ENCODE measurements at regions of chr1 and their contacts with region 1.

Region 1: GRCh38 chr1:12124693-12125421 is 41.9 kb upstream of the TNFRSF1B start:
- DNase-seq: peak; percentile 69 to 80 (median 74)
- H3K4me3 ChIP-seq: no peak overlapping the region
- H3K27ac ChIP-seq: no peak overlapping the region
- H3K4me1 ChIP-seq: peaks cover 4 to 21% (median 18%) of the 10 kb centered on the region in 4 experiments
- H3K27me3 ChIP-seq: no peaks in the 10 kb centered on the region

Region 2: GRCh38 chr1:12005488-12006166 is 119.2 kb before region 1 on chr1:
- CTCF ChIA-PET with region 1: no interaction called
- POLR2A ChIA-PET with region 1: no interaction called
- DNase-seq: peak; percentile 51 to 78 (median 66)
- H3K4me3 ChIP-seq: no peak overlapping the region
- H3K27ac ChIP-seq: peak overlapping the region in 1 of 2 experiments; percentile 49
- H3K4me1 ChIP-seq: no peaks in the 10 kb centered on the region
- H3K27me3 ChIP-seq: no peaks in the 10 kb centered on the region

Region 3: DNA sequence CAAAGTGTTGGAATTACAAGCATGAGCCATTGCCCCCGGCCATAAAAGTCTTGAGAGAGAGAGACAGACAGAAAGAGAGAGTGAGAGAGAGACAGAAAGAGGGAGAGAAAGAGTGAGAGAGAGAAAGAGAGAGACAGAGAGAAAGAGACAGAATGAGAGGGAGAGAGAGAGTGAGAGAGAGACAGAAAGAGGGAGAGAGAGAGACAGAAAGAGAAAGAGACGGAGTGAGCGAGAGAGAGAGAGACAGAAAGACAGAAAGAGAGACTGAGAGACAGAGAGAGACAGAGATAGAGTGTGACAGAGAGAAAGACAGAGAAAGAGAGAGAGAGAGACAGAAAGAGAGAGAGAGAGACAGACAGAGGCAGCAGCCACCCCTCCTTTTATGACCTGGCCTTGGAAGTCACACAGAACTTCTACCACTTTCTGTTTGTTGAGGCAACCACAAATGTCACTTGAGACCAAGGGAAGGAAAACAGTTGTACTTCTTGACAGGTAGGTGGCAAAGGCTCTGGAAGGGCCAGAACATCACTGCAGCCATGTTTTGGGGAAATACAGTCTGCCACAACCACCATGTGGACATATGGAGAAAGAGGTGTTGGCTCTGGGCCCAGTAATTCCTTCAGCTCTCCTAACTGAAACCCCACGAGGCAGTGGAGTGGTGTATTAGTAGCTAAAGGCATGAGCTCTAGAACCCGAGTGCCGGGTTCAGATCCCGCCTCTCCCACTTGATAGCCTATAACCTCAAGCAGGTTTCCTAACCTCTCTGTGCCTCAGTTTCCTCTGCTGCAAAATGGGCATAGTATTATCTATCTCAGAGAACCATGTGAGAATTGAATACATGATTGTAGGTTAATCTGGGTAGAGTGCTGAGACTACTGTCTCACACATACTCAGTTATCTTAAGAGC is 11.2 kb before region 1 on chr1:
- CTCF ChIA-PET with region 1: interaction called, 10 read pairs
- POLR2A ChIA-PET with region 1: interaction called, 3 read pairs
- DNase-seq: peak in 2 of 3 donors; percentile 37 to 45
- H3K4me3 ChIP-seq: no peak overlapping the region
- H3K27ac ChIP-seq: no peak overlapping the region
- H3K4me1 ChIP-seq: no peaks in the 10 kb centered on the region
- H3K27me3 ChIP-seq: no peaks in the 10 kb centered on the region

Region 4: DNA sequence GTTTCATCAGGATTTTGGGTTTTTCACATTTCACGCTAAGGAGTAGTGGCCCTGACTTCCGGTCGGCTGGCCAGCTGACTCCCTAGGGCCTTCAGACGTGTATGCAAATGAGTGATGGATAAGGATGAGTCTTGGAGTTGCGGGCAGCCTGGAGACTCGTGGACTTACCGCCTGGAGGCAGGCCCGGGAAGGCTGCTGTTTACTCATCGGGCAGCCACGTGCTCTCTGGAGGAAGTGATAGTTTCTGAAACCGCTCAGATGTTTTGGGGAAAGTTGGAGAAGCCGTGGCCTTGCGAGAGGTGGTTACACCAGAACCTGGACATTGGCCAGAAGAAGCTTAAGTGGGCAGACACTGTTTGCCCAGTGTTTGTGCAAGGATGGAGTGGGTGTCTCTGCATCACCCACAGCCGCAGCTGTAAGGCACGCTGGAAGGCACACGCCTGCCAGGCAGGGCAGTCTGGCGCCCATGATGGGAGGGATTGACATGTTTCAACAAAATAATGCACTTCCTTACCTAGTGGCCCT is 18.8 kb after region 1 on chr1:
- CTCF ChIA-PET with region 1: interaction called, 12 read pairs
- POLR2A ChIA-PET with region 1: no interaction called
- DNase-seq: peak in 2 of 3 donors; percentile 66 to 76
- H3K4me3 ChIP-seq: peak overlapping the region in 2 of 7 experiments; percentile 20 to 28
- H3K27ac ChIP-seq: no peak overlapping the region
- H3K4me1 ChIP-seq: peaks cover 8 to 87% (median 78%) of the 10 kb centered on the region in 4 experiments
- H3K27me3 ChIP-seq: no peaks in the 10 kb centered on the region

Region 5: GRCh38 chr1:12184008-12184681 is 59.3 kb after region 1 on chr1:
- CTCF ChIA-PET with region 1: interaction called, 89 read pairs
- POLR2A ChIA-PET with region 1: no interaction called
- DNase-seq: peak in 2 of 3 donors; percentile 87 to 88
- H3K4me3 ChIP-seq: peak overlapping the region in 2 of 7 experiments; percentile 8 to 21
- H3K27ac ChIP-seq: peak overlapping the region in 1 of 2 experiments; percentile 11
- H3K4me1 ChIP-seq: peaks cover 3 to 75% (median 39%) of the 10 kb centered on the region in 4 experiments
- H3K27me3 ChIP-seq: no peaks in the 10 kb centered on the region

Region 6: GRCh38 chr1:12208764-12209494 is 84.1 kb after region 1 on chr1:
- CTCF ChIA-PET with region 1: interaction called, 213 read pairs
- POLR2A ChIA-PET with region 1: no interaction called
- DNase-seq: peak; percentile 80 to 88 (median 82)
- H3K4me3 ChIP-seq: peak overlapping the region in 2 of 7 experiments; percentile 2 to 5
- H3K27ac ChIP-seq: no peak overlapping the region
- H3K4me1 ChIP-seq: peaks cover 7 to 32% (median 27%) of the 10 kb centered on the region in 4 experiments
- H3K27me3 ChIP-seq: no peaks in the 10 kb centered on the region

Region 7: GRCh38 chr1:12229835-12230548 is 105.1 kb after region 1 on chr1 and contains the start of gene VPS13D:
- CTCF ChIA-PET with region 1: interaction called, 19 read pairs
- POLR2A ChIA-PET with region 1: no interaction called
- DNase-seq: peak; percentile 78 to 88 (median 86)
- H3K4me3 ChIP-seq: peak within 1 kb of the TSS; percentile 69 to 92 (median 88)
- H3K27ac ChIP-seq: peak within 1 kb of the TSS; percentile 25 to 84
- H3K4me1 ChIP-seq: peaks cover 4 to 12% (median 11%) of the 10 kb centered on the region in 4 experiments
- H3K27me3 ChIP-seq: no peaks in the 10 kb centered on the region

Measured in common myeloid progenitor, CD34-positive (primary cell).